Natural killer cell (primary cell): ENCODE measurements at regions of chr6 and their contacts with region 1.

Region 1: GRCh38 chr6:154805288-154805911 is 72.2 kb downstream of the SCAF8 start:
- DNase-seq: peak in 1 of 2 donors; percentile 65
- ATAC-seq: peak; percentile 67 to 92 (median 76)
- H3K4me3 ChIP-seq: no peak overlapping the region
- H3K4me3 Mint-ChIP-seq: no peak overlapping the region
- H3K27ac ChIP-seq: no peak overlapping the region
- H3K27ac Mint-ChIP-seq: peak overlapping the region; percentile 6 to 58
- H3K4me1 ChIP-seq: no peaks in the 10 kb centered on the region
- H3K4me1 Mint-ChIP-seq: peaks cover under 1 to 7% of the 10 kb centered on the region in 2 donors
- H3K27me3 ChIP-seq: no peaks in the 10 kb centered on the region
- H3K27me3 Mint-ChIP-seq: no peaks in the 10 kb centered on the region
- CTCF ChIP-seq: peak; percentile 83

Region 2: DNA sequence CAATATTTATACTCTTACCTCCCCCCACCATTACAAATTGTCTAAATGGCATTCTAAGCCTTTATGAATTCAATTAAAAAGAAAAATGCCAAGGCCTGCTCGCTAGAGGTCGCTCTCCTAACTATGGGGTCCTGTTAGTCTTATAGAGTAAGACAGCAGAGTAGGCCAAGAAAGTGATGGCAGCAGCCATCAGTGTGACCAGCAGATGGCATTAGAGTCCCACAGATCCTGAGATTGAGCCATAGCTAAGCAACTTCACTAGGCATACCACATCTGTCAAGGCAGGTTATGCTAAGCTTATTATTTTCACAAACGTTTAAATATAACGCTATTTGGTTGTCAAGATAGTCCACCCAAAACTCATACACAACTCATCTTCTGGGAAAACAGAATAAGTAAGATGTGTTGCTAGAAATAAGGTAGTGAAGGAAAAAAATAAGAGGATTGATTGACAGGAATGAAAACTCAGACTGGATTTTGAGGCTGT is 129.8 kb before region 1 on chr6:
- intact Hi-C with region 1: loop called (anchors 1 kb)
- DNase-seq: peak; percentile 75 to 96
- ATAC-seq: peak; percentile 100
- H3K4me3 ChIP-seq: no peak overlapping the region
- H3K4me3 Mint-ChIP-seq: no peak overlapping the region
- H3K27ac ChIP-seq: no peak overlapping the region
- H3K27ac Mint-ChIP-seq: no peak overlapping the region
- H3K4me1 ChIP-seq: no peaks in the 10 kb centered on the region
- H3K4me1 Mint-ChIP-seq: no peaks in the 10 kb centered on the region
- H3K27me3 ChIP-seq: no peaks in the 10 kb centered on the region
- H3K27me3 Mint-ChIP-seq: no peaks in the 10 kb centered on the region
- CTCF ChIP-seq: peak; percentile 99

Region 3: DNA sequence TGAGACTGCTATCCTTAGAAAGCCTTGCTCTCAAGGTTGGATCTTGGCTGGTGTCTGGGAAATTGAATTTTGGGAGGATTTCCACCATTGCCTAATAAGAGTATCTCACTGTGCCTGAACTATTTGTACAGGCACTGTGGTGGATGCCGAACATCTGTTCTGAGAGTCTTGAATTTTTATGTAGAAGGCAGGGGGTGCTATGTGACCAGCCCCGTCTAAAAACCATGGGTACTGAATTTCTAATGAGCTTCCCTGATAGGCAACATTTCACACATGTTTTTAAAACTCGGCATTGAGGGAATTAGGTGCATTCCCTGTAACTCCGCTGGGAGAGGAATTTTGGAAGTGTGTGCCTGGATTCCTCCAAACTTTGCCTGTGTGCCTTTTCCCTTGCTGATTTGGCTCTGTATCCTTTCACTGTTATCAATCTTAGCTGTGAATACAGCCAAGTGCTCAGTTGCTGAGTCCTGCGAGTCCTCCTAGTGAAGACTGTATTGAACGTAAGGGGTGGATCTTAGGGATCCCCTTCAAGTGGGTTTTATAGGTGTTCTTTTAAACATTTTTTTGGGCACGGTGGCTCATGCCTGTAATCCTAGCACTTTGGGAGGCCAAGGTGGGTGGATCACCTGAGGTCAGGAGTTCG is 99.8 kb before region 1 on chr6:
- intact Hi-C with region 1: loop called (anchors 1 kb)
- DNase-seq: peak in 1 of 2 donors; percentile 38
- ATAC-seq: peak in 2 of 3 donors; percentile 42 to 43
- H3K4me3 ChIP-seq: no peak overlapping the region
- H3K4me3 Mint-ChIP-seq: no peak overlapping the region
- H3K27ac ChIP-seq: no peak overlapping the region
- H3K27ac Mint-ChIP-seq: no peak overlapping the region
- H3K4me1 ChIP-seq: no peaks in the 10 kb centered on the region
- H3K4me1 Mint-ChIP-seq: no peaks in the 10 kb centered on the region
- H3K27me3 ChIP-seq: peaks cover 2% of the 10 kb centered on the region
- H3K27me3 Mint-ChIP-seq: peaks cover 19 to 41% of the 10 kb centered on the region in 2 donors
- CTCF ChIP-seq: peak; percentile 32